ENCODE measurements at regions of chr5 and their contacts with region 1.

Region 1: DNA sequence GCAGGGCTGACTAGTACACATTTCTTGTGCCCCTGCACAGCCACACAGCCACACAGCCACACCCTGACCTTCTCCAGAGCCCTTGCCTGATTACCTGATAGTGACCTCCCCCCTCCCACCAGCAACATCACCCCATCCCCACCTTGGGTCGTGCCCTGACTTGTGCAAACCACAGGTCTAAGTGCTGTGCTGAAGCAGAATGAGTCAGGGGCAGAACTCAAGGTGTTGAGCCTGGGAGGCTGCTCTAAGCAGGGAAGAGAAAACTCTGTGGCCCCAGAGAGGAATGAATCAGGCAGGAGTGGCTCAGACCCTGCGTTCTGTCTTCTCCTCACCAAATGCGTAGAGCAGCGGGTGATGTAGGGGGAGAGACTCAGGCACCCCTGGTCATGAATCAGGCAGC is 24.3 kb upstream of the FAT2 start:
- DNase-seq: peak; percentile 81 to 84
- H3K4me3 ChIP-seq: no peak overlapping the region
- H3K27ac ChIP-seq: 0 out of 2 replicates have a peak overlapping the region, but pooled peaks have one; percentile 11
- H3K4me1 ChIP-seq: peaks cover 70% of the 10 kb centered on the region
- H3K27me3 ChIP-seq: no peaks in the 10 kb centered on the region
- CTCF ChIP-seq: no peak

Region 2: GRCh38 chr5:151384106-151384505 is 231.3 kb before region 1 on chr5:
- CTCF ChIA-PET with region 1: no interaction called
- POLR2A ChIA-PET with region 1: no interaction called
- intact Hi-C with region 1: no loop called
- DNase-seq: peak in 1 of 2 experiments; percentile 36
- H3K4me3 ChIP-seq: no peak overlapping the region
- H3K27ac ChIP-seq: no peak overlapping the region
- H3K4me1 ChIP-seq: no peaks in the 10 kb centered on the region; the same call in 1 of the 2 replicates
- H3K27me3 ChIP-seq: peaks cover 25% of the 10 kb centered on the region
- CTCF ChIP-seq: no peak

Region 3: GRCh38 chr5:151569132-151570046 is 46.0 kb before region 1 on chr5:
- CTCF ChIA-PET with region 1: no interaction called
- POLR2A ChIA-PET with region 1: no interaction called
- intact Hi-C with region 1: loop called (anchors 1 kb)
- DNase-seq: no peak
- H3K4me3 ChIP-seq: no peak overlapping the region
- H3K27ac ChIP-seq: no peak overlapping the region
- H3K4me1 ChIP-seq: peaks cover 20% of the 10 kb centered on the region
- H3K27me3 ChIP-seq: peaks cover 7% of the 10 kb centered on the region; the same call in 1 of the 2 replicates
- CTCF ChIP-seq: no peak

Region 4: DNA sequence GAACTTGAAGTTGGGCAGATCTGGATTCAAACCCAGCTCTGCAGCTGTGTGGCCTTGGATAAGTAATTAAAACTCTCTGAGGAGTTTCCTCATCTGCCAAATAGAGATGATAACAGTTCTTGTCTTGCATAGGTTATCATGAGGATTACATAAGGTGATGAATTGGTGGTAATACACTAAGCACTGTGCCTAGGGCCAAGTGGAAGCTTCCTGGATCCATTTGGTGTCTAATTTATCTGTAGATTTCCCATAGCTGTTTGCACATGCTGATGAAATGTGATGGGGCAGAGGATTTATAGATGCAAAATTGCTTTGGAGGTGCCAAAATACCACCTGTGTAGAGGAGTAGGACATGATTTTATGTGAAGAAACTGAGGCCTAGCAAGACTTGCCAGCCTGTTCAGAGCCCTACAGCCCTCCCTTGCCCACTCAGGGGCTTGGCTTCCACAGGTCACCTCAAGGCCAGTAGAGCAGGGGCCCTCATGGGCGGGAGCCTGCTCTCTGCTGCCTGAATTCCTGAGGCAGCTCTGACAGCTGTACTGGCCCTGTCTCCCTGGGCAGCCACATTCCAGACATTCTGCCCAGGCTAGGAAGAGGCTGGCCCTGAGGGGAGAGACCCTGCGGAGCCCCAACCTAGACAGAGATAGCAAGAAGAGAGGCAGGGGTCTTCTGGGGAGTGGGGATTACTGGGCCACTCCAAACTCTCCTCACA is 18.4 kb before region 1 on chr5:
- CTCF ChIA-PET with region 1: no interaction called
- POLR2A ChIA-PET with region 1: no interaction called
- intact Hi-C with region 1: loop called (anchors 1 kb)
- DNase-seq: peak; percentile 42 to 61
- H3K4me3 ChIP-seq: no peak overlapping the region
- H3K27ac ChIP-seq: 0 out of 2 replicates have a peak overlapping the region, but pooled peaks have one; percentile 11
- H3K4me1 ChIP-seq: peaks cover 39% of the 10 kb centered on the region
- H3K27me3 ChIP-seq: no peaks in the 10 kb centered on the region
- CTCF ChIP-seq: no peak

Measured in PC-9 (cell line).